ENCODE measurements at regions of chr9 and their contacts with region 1.

Region 1: GRCh38 chr9:133538851-133539833 is 4.6 kb downstream of the ADAMTSL2 start:
- DNase-seq: peak; percentile 75 to 86 (median 80)
- ATAC-seq: peak; percentile 65 to 78 (median 73)
- H3K4me3 ChIP-seq: peak overlapping the region in 10 of 12 donors; percentile 9 to 43 (median 36)
- H3K27ac ChIP-seq: peak overlapping the region in 11 of 12 donors; percentile 44 to 80 (median 66)
- H3K4me1 ChIP-seq: peaks cover 0 to 64% (median 36%) of the 10 kb centered on the region in 12 donors
- H3K27me3 ChIP-seq: peaks cover 0 to 9% (median 0%) of the 10 kb centered on the region in 9 donors
- CTCF ChIP-seq: peak in 1 of 12 donors; percentile 4
- POLR2A ChIP-seq: no peak

Region 2: GRCh38 chr9:133558191-133559126 is 19.3 kb after region 1 on chr9:
- intact Hi-C with region 1: loop called in 3 of 10 experiments (anchors 1 to 2 kb)
- DNase-seq: peak in 4 of 5 donors; percentile 60 to 74 (median 68)
- ATAC-seq: peak; percentile 48 to 80 (median 59)
- H3K4me3 ChIP-seq: peak overlapping the region in 7 of 12 donors; percentile 3 to 35 (median 11)
- H3K27ac ChIP-seq: peak overlapping the region; percentile 4 to 85 (median 69)
- H3K4me1 ChIP-seq: peaks cover 3 to 55% (median 44%) of the 10 kb centered on the region in 12 donors
- H3K27me3 ChIP-seq: no peaks in the 10 kb centered on the region
- CTCF ChIP-seq: no peak
- POLR2A ChIP-seq: no peak

Region 3: GRCh38 chr9:133572821-133573361 is 33.7 kb after region 1 on chr9:
- intact Hi-C with region 1: loop called in 2 of 10 experiments (anchors 5 kb)
- DNase-seq: peak; percentile 76 to 92 (median 86)
- ATAC-seq: peak; percentile 90 to 97 (median 93)
- H3K4me3 ChIP-seq: no peak overlapping the region
- H3K27ac ChIP-seq: peak overlapping the region in 4 of 12 donors; percentile 29 to 57 (median 39)
- H3K4me1 ChIP-seq: peaks cover 0 to 35% (median 14%) of the 10 kb centered on the region in 12 donors
- H3K27me3 ChIP-seq: peaks cover 0 to 10% (median 0%) of the 10 kb centered on the region in 9 donors
- CTCF ChIP-seq: no peak
- POLR2A ChIP-seq: no peak

Region 4: GRCh38 chr9:133677126-133678010 is 138.2 kb after region 1 on chr9:
- intact Hi-C with region 1: loop called in 1 of 10 experiments (anchors 5 kb)
- DNase-seq: peak in 1 of 5 donors; percentile 11
- ATAC-seq: no peak
- H3K4me3 ChIP-seq: no peak overlapping the region
- H3K27ac ChIP-seq: peak overlapping the region in 1 of 12 donors; percentile 52
- H3K4me1 ChIP-seq: peaks cover 0 to 24% (median 16%) of the 10 kb centered on the region in 12 donors
- H3K27me3 ChIP-seq: no peaks in the 10 kb centered on the region
- CTCF ChIP-seq: no peak
- POLR2A ChIP-seq: no peak

Measured in heart left ventricle (tissue), 16 donors.